ENCODE measurements at regions of chr7 and their contacts with region 1.

Region 1: GRCh38 chr7:143240291-143241168 is 18.7 kb downstream of the TAS2R40 start:
- DNase-seq: peak; percentile 63
- ATAC-seq: peak; percentile 91

Region 2: GRCh38 chr7:143205560-143206293 is 34.8 kb before region 1 on chr7:
- intact Hi-C with region 1: no loop called
- DNase-seq: no peak
- ATAC-seq: peak; percentile 54

Region 3: GRCh38 chr7:143287935-143288826 is 47.7 kb after region 1 on chr7 and contains the start of gene CASP2:
- intact Hi-C with region 1: loop called (anchors 5 kb)
- DNase-seq: peak; percentile 100
- ATAC-seq: peak; percentile 97
- total RNA-seq, gene CASP2: 11.8 TPM

Region 4: GRCh38 chr7:143305423-143306070 is 65.0 kb after region 1 on chr7:
- intact Hi-C with region 1: loop called (anchors 1 kb)
- DNase-seq: peak; percentile 82
- ATAC-seq: peak; percentile 82